ENCODE measurements at regions of chr12 and their contacts with region 1.

Region 1: DNA sequence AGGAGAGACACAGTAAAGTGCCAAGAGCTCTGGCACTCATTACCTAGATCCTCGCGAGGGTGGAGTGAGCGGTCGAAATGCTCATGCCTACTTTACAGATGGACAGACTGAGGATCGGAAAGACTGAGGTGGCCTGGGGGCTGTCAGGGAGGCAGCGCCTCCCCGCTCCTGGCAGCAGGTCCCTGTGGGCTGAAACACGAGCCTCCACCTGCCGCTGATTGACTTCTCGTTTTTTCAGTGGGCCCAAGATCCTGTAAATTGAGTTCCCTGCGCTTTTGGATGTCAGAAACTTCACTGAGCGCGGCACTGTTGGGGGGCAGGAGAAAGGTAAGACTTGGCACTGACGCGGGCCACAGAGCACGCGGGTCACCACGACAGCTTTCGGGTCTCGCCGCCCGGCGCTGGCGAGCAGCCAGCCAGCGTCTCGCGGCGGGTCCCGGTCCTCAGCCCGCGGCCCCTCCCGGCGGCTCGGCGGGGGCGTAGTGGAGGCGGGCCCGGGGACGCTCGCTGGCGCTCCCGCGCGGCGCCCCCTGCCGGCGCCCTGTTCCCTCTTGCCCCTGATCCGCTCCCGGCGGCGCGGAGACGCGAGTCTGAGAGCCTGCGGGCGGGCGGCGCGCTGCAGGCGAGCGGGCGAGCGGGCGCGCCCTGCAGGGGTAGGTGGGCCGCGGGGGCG is 550 bp upstream of the SCN8A start:
- DNase-seq: peak; percentile 22
- H3K4me3 ChIP-seq: peak overlapping the region; percentile 44 to 62 (median 57)
- H3K27ac ChIP-seq: no peak overlapping the region
- H3K4me1 ChIP-seq: peaks cover 9% of the 10 kb centered on the region
- H3K27me3 ChIP-seq: peaks cover 3% of the 10 kb centered on the region
- CTCF ChIP-seq: peak; percentile 18 to 49

Region 2: DNA sequence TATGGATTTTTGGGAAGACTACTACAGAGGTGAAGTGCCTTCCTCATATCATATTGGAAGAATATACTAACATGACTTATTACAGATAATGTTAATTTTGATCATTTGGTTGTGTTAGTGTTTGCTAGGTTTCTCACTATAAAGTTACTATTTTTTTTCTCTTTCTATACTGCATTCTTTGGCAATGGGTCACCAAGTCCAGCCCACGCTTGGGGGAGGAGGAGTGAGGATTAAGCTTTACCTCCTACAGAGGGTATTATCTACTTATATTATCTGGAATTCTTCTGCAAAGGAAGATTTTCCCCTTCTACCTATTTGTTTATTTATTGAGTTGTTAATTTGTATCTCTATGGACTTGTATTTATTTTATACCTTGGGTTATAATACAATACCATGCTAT is 32.1 kb after region 1 on chr12:
- CTCF ChIA-PET with region 1: no interaction called
- dilution Hi-C with region 1: no loop called
- in situ Hi-C with region 1: no loop called
- intact Hi-C with region 1: no loop called
- DNase-seq: no peak
- H3K4me3 ChIP-seq: no peak overlapping the region
- H3K27ac ChIP-seq: no peak overlapping the region
- H3K4me1 ChIP-seq: no peaks in the 10 kb centered on the region
- H3K27me3 ChIP-seq: no peaks in the 10 kb centered on the region
- CTCF ChIP-seq: no peak

Region 3: DNA sequence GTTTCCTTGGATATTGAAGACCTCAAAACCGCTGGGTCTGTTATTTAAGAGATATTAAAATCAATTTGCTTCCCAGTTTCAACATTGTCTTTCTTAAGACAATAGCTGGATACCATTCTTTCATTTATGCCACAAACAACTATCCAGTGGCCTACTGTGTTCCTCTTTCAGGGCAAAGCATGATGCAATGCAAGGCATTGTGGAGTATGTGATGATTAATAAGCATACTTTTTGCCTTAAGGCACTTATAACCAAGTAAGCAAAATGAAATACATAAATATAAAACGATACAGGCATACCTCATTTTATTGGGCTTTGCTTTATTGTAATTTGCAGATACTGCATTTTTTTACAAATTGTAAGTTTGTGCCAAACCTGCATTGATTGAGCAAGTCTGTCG is 46.1 kb after region 1 on chr12:
- CTCF ChIA-PET with region 1: no interaction called
- dilution Hi-C with region 1: no loop called
- in situ Hi-C with region 1: no loop called
- intact Hi-C with region 1: loop called (anchors 5 kb)
- DNase-seq: peak; percentile 69
- H3K4me3 ChIP-seq: no peak overlapping the region
- H3K27ac ChIP-seq: peak overlapping the region; percentile 65
- H3K4me1 ChIP-seq: peaks cover 49% of the 10 kb centered on the region
- H3K27me3 ChIP-seq: no peaks in the 10 kb centered on the region
- CTCF ChIP-seq: no peak

Region 4: GRCh38 chr12:51678086-51678724 is 87.7 kb after region 1 on chr12:
- CTCF ChIA-PET with region 1: no interaction called
- dilution Hi-C with region 1: no loop called
- in situ Hi-C with region 1: no loop called
- intact Hi-C with region 1: loop called (anchors 1 kb)
- DNase-seq: peak; percentile 31
- H3K4me3 ChIP-seq: no peak overlapping the region
- H3K27ac ChIP-seq: no peak overlapping the region
- H3K4me1 ChIP-seq: peaks cover 1% of the 10 kb centered on the region
- H3K27me3 ChIP-seq: no peaks in the 10 kb centered on the region
- CTCF ChIP-seq: peak; percentile 90 to 93

Measured in mammary epithelial cell (primary cell).